PC-9 (cell line): ENCODE measurements at regions of chr5 and their contacts with region 1.

Region 1: DNA sequence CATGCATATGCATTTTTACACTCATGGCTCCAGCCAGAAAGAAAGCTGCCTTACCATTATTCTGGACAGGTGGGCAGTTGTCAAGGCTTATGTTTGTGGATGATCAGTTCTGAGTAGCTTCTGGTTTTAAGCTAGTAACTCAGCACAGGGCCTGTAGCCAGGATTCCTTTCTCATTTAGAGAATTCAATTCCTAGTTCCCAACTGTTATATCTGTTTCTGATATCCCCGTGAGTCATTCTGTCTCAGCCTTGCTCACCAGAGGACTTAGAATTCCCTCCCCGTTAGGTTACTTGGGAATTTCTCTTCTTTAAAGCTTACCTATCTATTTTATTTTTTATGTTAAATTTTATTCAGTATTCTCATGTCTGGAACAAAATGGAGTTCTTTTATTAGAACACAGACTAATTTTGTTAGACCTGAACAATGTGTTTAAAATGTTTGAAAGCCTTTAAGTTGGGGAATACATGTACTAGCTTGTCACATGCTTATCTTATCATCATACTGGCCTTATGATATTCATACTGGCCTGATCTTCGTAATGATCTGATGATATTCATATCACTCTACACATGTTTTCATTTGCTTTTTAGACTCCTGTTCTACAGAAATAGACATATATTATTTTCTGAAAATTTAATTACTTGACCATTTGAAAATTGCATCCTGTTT is 47.1 kb downstream of the CAST start:
- DNase-seq: no peak
- H3K4me3 ChIP-seq: no peak overlapping the region
- H3K27ac ChIP-seq: peak overlapping the region; percentile 57
- H3K4me1 ChIP-seq: peaks cover 57% of the 10 kb centered on the region
- H3K27me3 ChIP-seq: no peaks in the 10 kb centered on the region
- CTCF ChIP-seq: no peak

Region 2: DNA sequence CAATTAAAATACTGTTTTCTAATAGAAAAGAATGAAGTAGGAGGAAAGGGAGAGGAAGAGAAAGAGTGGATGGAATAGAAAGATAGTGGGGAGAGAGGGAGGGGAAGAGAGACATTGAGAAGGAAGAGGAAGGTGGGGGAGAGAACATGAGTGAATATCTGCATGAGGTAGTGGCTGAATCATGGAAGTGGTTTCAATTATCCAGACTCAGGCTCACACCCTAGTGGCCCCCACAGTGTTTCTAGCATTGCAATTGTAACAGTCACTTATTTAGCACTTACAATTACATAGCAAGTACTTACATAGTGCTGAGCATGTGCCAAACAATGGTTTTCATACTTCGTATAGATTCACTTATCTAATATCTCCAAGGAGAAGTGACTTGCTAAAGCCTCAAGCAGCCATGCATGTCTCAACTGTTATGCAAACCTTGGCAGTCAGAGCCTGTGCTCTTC is 25.6 kb after region 1 on chr5:
- CTCF ChIA-PET with region 1: no interaction called
- POLR2A ChIA-PET with region 1: no interaction called
- intact Hi-C with region 1: loop called (anchors 1 kb)
- DNase-seq: no peak
- H3K4me3 ChIP-seq: peak overlapping the region; percentile 14; the same call in 1 of the 2 replicates
- H3K27ac ChIP-seq: peak overlapping the region; percentile 61
- H3K4me1 ChIP-seq: peaks cover 38% of the 10 kb centered on the region
- H3K27me3 ChIP-seq: no peaks in the 10 kb centered on the region
- CTCF ChIP-seq: no peak